AG04450 (cell line): ENCODE measurements at regions of chr3 and their contacts with region 1.

Region 1: GRCh38 chr3:183122257-183122932 is 23.1 kb upstream of the MCCC1 start:
- DNase-seq: no peak
- H3K4me3 ChIP-seq: no peak overlapping the region
- H3K27ac ChIP-seq: no peak overlapping the region
- H3K27me3 ChIP-seq: peaks cover 9% of the 10 kb centered on the region
- CTCF ChIP-seq: peak; percentile 82

Region 2: DNA sequence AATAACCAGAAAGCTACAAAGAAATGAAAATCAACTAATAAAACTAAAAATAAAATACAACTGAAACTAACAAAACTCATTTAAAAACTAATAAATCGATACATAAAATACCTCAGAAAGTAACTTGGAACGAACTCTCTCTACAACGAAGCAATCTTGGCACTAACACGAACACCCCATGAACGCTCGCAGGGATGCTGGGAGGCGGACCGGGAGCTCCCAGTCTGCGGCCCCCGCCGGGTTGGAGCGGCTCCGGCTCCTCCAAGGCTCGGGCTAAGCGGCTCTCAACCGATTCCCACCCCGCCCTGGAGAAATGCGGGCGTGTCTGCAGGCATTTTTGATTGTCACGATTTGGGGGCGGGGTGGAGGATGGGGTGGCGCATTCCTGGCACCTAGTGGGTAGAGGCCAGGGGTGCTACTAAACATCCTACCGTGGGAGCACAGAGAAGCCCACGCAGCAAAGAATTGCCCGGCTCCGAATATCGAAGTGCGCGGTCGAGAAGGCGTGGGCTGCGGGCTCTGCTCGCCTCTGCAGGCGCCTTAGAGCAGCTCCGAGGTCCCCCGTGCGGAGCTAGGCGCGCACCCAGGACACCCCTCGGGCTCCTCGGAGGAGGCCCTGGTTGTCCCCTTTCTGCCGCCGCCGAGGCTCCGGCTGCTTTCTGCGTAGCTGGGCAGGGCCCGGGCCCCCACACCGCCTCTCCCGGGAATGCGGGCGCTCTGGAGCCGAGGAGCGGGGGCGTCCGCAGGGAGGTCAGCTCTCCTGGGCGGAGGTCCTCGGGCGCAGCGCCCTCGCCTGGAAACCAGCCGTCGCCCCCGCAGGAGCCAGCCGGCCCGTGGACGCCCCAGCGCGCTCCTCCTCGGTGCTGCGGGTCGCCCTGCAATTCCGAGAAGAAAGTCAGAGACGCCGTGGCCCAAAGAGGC is 56.5 kb after region 1 on chr3:
- CTCF ChIA-PET with region 1: interaction called, 39 read pairs
- POLR2A ChIA-PET with region 1: no interaction called
- DNase-seq: no peak
- H3K4me3 ChIP-seq: peak overlapping the region; percentile 58
- H3K27ac ChIP-seq: no peak overlapping the region
- H3K27me3 ChIP-seq: peaks cover 29% of the 10 kb centered on the region
- CTCF ChIP-seq: no peak

Region 3: DNA sequence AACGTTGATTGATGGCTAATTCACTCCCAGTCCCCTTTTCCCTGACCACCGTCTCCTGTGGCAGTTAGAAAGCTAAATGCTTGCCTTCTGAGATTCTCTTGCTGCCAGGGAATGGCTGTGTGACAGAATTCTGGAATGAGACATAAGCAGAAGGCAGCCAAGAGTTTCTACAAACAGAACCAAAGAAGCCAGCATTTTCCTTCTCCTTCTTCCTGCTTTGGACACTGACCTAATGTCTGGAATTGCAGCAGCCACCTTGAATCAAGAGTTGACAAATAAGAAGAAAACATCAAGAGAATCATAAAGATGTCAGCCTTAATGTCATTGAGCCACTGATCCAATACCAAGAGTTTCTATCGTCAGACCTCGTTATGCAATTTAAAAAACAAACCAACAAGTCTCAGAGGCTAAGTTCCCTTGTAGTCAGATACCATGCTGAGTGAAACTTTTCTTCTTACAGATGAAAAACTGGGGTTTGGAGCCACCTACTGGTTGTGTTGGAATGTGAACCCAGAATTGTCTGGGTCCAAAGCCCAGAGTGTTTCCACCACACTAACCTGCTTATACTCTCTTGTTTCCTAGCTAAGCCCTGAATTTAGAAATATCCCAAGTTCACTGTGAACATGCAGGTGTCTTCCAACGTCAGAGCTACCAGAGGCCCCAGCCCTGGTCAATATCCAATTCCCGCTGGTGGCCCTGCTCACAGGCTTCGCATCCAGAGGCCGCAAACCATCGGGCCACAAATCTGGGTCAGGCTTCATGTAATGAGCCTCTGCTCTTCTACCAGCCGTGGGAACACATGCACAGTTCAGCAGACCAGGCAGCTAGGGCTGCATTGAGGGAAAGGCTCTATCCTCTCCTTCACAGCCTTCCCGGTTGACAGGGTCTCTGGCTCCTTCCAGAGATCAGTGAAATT is 263.6 kb after region 1 on chr3:
- CTCF ChIA-PET with region 1: interaction called, 157 read pairs
- POLR2A ChIA-PET with region 1: no interaction called
- DNase-seq: peak; percentile 49
- H3K4me3 ChIP-seq: no peak overlapping the region
- H3K27ac ChIP-seq: no peak overlapping the region
- H3K27me3 ChIP-seq: peaks cover 22% of the 10 kb centered on the region
- CTCF ChIP-seq: peak; percentile 75

Region 4: DNA sequence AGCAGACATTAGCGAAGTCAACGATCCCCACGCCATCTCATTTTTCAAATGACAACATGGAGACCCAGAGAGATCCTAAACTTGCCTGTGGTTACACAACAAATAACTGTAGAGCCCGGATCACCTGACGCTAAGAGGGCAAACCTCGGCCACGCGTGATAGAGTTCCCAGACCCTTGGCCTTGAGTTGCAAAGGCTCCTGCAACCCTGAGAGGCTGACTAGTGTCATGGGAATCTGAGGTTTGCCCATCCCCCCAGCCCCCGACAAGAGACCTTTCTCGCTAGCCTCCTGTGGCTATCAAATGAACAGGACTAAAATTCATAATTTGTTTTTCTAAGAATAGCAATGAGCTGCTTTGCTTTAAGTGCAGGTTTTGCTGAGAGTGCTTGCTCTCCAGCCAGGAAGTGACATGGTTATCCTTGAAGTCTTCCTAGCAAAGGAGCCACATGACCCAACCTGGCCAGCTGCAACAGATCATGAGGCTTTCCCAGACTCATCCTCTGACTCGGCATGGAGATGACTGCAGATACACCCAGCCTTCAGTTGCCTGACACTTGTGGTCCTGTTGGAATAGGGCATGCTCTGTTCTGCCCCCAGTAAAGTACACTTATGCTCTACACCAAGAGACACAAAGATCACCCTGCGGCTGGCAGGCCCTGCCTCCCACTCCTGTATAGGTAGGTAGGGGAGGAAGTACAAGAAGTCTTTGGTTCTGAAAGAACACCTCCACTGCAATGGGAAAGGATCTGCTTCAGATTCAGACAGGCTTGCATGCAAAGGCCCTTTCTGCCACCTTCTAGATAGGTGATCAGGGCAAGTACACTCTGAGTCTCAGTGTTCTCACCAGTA is 270.0 kb after region 1 on chr3:
- CTCF ChIA-PET with region 1: interaction called, 21 read pairs
- POLR2A ChIA-PET with region 1: no interaction called
- DNase-seq: no peak
- H3K4me3 ChIP-seq: no peak overlapping the region
- H3K27ac ChIP-seq: no peak overlapping the region
- H3K27me3 ChIP-seq: peaks cover 37% of the 10 kb centered on the region
- CTCF ChIP-seq: no peak